BJ (cell line): ENCODE measurements at regions of chr3 and their contacts with region 1.

Region 1: GRCh38 chr3:10738688-10739372 is 77.2 kb upstream of the SLC6A11 start:
- DNase-seq: no peak
- H3K4me3 ChIP-seq: no peak overlapping the region; the same call in 1 of the 2 replicates
- H3K27me3 ChIP-seq: peaks cover 1% of the 10 kb centered on the region; the same call in 1 of the 2 replicates
- CTCF ChIP-seq: peak; percentile 79

Region 2: GRCh38 chr3:10344147-10344943 is 394.5 kb before region 1 on chr3:
- CTCF ChIA-PET with region 1: interaction called, 80 read pairs
- POLR2A ChIA-PET with region 1: no interaction called
- DNase-seq: no peak
- H3K4me3 ChIP-seq: no peak overlapping the region
- H3K27me3 ChIP-seq: peaks cover 3% of the 10 kb centered on the region; the same call in 1 of the 2 replicates
- CTCF ChIP-seq: peak; percentile 96

Region 3: GRCh38 chr3:10417849-10418248 is 321.0 kb before region 1 on chr3:
- CTCF ChIA-PET with region 1: interaction called, 38 read pairs
- POLR2A ChIA-PET with region 1: no interaction called
- DNase-seq: no peak
- H3K4me3 ChIP-seq: no peak overlapping the region
- H3K27me3 ChIP-seq: peaks cover 9% of the 10 kb centered on the region
- CTCF ChIP-seq: peak; percentile 34

Region 4: DNA sequence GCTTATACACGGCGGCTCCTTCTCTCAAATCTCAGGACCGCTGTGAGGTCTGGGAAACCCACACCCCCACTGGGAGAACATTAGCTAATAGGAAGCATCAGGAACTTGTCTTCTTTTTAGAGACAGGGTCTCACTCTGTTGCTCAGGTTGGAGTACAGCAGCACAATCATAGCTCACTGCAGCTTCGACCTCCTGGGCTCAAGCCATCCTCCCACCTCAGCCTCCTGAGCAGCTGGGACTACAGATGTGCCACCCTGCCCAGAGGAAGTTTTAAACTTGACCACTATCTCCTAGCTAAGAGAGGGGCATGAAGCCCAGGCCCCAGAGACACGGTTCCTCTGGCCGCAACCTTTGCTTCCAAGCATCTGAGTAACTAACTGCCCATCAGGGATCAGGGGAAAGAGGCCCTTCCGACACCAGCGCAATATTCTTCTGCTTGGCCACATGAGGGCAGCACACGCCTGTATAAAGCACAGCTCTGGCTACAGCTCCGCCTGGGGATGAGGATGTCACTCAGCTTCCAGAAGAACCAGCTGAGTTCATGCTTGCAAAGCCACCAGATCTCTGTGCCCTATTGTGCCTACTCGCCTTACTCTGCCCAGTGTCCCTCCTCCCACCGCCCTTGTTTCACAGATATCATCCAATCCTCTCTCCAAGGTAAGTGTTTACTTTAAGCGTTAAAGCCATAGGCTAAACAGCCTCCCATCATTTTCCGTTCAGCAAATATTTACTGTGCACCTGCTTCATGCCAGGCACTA is 19.7 kb after region 1 on chr3:
- CTCF ChIA-PET with region 1: interaction called, 20 read pairs
- POLR2A ChIA-PET with region 1: no interaction called
- DNase-seq: no peak
- H3K4me3 ChIP-seq: no peak overlapping the region
- H3K27me3 ChIP-seq: no peaks in the 10 kb centered on the region
- CTCF ChIP-seq: peak; percentile 80

Region 5: GRCh38 chr3:10783357-10784351 is 44.8 kb after region 1 on chr3:
- CTCF ChIA-PET with region 1: no interaction called
- POLR2A ChIA-PET with region 1: no interaction called
- DNase-seq: no peak
- H3K4me3 ChIP-seq: no peak overlapping the region
- H3K27me3 ChIP-seq: no peaks in the 10 kb centered on the region
- CTCF ChIP-seq: peak; percentile 77

Region 6: GRCh38 chr3:10852066-10852808 is 113.4 kb after region 1 on chr3:
- CTCF ChIA-PET with region 1: no interaction called
- POLR2A ChIA-PET with region 1: no interaction called
- DNase-seq: no peak
- H3K4me3 ChIP-seq: no peak overlapping the region
- H3K27me3 ChIP-seq: no peaks in the 10 kb centered on the region
- CTCF ChIP-seq: no peak